HAP-1 (cell line): ENCODE measurements at regions of chr2 and their contacts with region 1.

Region 1: GRCh38 chr2:218394298-218395089 is 5.2 kb upstream of the CTDSP1 start:
- DNase-seq: no peak
- H3K4me3 ChIP-seq: no peak overlapping the region
- H3K4me1 ChIP-seq: peaks cover 27% of the 10 kb centered on the region
- H3K27me3 ChIP-seq: no peaks in the 10 kb centered on the region

Region 2: DNA sequence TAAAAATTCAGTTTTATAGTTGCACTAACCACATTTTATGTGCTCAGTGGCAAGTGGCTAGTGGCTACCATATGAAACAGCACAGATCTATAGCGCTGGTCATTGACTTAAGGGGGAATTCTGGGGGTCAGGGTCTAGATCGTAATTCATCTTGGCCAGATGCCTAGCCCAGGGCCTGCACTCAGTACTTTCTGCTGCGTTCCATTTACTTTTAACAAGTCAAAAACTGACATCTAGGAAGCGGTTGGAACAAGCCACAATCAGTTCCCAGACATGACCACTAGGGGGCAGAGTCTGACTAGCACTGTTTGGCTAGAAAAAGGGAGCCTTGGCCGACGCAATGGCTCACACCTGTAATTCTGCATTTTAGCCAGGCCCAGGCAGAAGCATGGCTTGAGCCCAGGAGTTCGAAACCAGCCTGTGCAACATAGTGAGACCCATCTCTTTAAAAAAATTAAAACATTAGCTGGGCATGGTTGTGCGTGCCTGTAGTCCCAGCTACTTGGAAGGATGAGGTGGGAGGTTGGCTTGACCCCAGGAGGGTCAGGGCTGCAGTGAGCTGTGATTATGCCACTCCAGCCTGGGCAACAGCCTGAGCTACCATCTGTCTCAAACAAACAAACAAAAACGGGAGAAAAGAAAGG is 93.2 kb before region 1 on chr2:
- in situ Hi-C with region 1: loop called (anchors 5 kb)
- DNase-seq: peak; percentile 84 to 93
- H3K4me3 ChIP-seq: no peak overlapping the region
- H3K4me1 ChIP-seq: no peaks in the 10 kb centered on the region
- H3K27me3 ChIP-seq: no peaks in the 10 kb centered on the region

Region 3: DNA sequence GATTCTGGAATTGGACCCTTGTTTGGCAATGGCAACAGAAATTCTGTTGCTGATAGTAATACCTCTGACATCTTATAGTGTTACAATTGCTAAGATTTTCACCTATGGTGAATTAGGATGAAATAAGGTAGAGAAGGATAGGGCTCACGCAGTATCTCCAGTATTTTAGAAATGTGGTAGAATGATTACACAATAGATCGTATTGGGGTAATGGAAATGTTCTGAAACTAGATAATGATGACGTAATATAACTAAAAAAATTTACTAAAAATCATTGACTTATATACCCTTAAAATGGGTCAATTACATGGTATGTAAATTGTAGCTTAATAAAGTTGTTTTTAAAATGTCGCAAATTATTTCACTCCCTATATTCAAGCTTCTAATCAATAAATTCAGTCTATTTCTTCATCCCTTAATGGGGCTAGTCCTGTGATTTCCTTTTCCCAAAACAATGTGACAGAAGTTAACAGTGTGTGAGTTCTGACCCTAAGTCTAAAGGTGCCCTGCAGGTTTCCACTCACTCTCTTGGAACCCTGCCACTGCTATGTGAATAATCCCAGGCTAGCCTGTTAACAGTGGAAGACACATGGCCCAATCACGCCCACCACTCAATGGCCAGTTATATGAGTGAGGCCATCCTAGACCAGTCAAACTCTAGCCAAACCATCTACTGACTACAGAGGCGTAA is 142.5 kb after region 1 on chr2:
- in situ Hi-C with region 1: no loop called
- DNase-seq: no peak
- H3K4me3 ChIP-seq: no peak overlapping the region
- H3K4me1 ChIP-seq: no peaks in the 10 kb centered on the region
- H3K27me3 ChIP-seq: no peaks in the 10 kb centered on the region